BJ (cell line): ENCODE measurements at regions of chr12 and their contacts with region 1.

Region 1: DNA sequence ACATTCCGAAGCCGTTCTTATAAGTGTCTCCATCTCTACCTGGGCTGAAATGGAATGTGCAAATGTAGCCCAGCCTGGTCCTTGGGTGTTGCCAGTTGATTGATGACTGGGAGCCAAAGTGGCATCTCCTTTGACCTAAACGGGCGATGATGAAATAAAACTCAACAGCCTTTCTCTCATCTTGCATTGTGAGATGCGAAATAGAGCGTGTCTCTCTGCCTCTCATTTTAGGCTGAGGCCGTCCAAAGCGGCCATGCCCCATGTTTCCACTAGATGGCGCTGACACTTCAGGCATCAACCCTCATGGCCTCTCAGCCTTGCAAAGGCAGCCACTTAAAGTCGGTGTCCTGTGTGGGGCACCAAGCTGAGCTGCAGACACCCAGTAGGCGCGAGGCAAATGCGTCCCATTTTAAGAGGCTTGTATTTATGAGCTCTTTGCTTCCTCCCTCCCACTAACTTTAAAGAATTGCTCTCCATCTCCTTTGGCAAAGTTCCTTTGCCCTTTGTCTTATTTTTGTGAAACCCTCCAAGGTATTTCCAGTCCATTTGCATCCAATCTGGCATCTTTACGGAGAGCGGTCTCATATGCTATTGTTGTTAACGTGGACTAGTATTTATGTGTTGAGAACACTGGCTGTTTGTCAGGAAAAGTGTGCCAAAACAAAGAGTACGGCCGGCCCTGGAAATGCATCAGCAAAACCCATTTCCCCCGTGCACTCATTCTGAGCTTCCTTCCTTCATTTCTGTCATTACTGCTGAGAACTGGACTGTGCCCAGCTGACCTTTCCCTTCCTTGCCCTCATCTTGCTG is 25.0 kb downstream of the GPRC5A start:
- DNase-seq: no peak
- H3K4me3 ChIP-seq: no peak overlapping the region
- H3K27me3 ChIP-seq: no peaks in the 10 kb centered on the region
- CTCF ChIP-seq: peak; percentile 96

Region 2: DNA sequence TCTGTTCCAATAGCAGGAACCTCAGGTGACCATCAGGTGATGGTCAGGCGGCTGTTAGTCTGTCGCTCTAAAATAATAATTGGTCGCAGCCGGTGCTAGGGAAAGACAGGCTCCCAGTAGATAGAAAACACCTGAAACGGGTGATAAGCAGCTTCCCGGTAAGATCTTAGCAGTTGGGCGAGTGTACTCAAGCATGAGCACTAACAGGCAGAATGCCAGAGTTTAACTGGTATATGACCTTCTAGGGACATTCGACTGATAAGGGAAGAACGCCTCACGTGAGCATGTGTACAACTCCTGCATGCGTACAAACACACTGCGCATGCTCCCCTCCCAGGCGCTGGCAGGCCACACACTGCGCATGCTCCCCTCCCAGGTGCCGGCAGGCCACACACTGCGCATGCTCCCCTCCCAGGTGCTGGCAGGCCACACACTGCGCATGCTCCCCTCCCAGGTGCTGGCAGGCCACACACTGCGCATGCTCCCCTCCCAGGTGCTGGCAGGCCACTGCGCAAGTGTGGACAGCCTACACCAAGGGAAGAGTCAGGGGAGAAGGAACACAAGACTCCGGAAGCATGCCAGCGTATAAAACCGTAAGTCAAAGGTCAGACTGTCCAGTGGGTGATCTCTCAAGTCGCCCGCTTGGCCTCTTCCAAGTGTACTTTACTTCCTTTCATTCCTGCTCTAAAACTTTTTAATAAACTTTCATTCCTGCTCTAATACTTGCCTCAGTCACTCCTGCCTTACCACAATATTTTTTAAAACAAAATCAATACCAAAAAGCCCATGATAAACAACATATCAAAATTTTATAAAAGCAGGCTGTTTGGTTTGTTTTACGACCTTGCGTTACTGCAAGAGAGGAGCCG is 11.1 kb after region 1 on chr12:
- CTCF ChIA-PET with region 1: interaction called, 18 read pairs
- POLR2A ChIA-PET with region 1: interaction called, 4 read pairs
- DNase-seq: no peak
- H3K4me3 ChIP-seq: 0 out of 2 replicates have a peak overlapping the region, but pooled peaks have one; percentile 15
- H3K27me3 ChIP-seq: no peaks in the 10 kb centered on the region
- CTCF ChIP-seq: no peak

Region 3: GRCh38 chr12:12975322-12976077 is 59.2 kb after region 1 on chr12:
- CTCF ChIA-PET with region 1: interaction called, 96 read pairs
- POLR2A ChIA-PET with region 1: interaction called, 3 read pairs
- DNase-seq: no peak
- H3K4me3 ChIP-seq: no peak overlapping the region
- H3K27me3 ChIP-seq: no peaks in the 10 kb centered on the region
- CTCF ChIP-seq: peak; percentile 70

Region 4: GRCh38 chr12:12983420-12984035 is 67.2 kb after region 1 on chr12:
- CTCF ChIA-PET with region 1: interaction called, 96 read pairs
- POLR2A ChIA-PET with region 1: interaction called, 3 read pairs
- DNase-seq: no peak
- H3K4me3 ChIP-seq: no peak overlapping the region
- H3K27me3 ChIP-seq: no peaks in the 10 kb centered on the region
- CTCF ChIP-seq: peak; percentile 73